ENCODE measurements at regions of chr15 and their contacts with region 1.

Region 1: GRCh38 chr15:50576166-50576565 is 29.7 kb upstream of the USP50 start:
- DNase-seq: no peak
- ATAC-seq: no peak
- H3K4me3 ChIP-seq: no peak overlapping the region
- H3K27ac ChIP-seq: no peak overlapping the region
- H3K4me1 ChIP-seq: peaks cover 0 to 17% (median 0%) of the 10 kb centered on the region in 9 donors
- H3K27me3 ChIP-seq: no peaks in the 10 kb centered on the region
- CTCF ChIP-seq: no peak

Region 2: DNA sequence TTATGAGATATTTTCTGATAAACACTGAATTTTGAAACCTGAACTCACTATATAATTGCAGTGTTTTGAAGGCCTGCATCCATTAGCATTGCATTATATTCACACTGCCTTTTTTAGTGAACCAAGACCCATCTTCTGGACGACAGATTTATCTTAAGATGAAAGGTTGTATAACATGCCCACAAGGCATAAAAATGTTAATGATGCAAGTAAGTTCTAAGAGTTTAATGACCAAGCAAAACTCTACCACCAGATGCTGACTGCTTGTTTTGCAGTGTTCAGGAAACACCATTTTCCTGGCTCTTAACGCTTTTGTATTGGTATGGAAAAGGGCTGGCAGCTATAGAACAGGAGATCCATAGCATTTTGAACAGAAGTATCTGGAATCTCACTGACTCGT is 75.8 kb before region 1 on chr15:
- intact Hi-C with region 1: loop called in 1 of 10 experiments (anchors 5 kb)
- DNase-seq: no peak
- ATAC-seq: no peak
- H3K4me3 ChIP-seq: no peak overlapping the region
- H3K27ac ChIP-seq: no peak overlapping the region
- H3K4me1 ChIP-seq: no peaks in the 10 kb centered on the region
- H3K27me3 ChIP-seq: no peaks in the 10 kb centered on the region
- CTCF ChIP-seq: no peak

Region 3: GRCh38 chr15:50605462-50605861 is 29.3 kb after region 1 on chr15:
- intact Hi-C with region 1: loop called in 1 of 10 experiments (anchors 5 kb)
- DNase-seq: no peak
- ATAC-seq: no peak
- H3K4me3 ChIP-seq: no peak overlapping the region
- H3K27ac ChIP-seq: no peak overlapping the region
- H3K4me1 ChIP-seq: no peaks in the 10 kb centered on the region
- H3K27me3 ChIP-seq: no peaks in the 10 kb centered on the region
- CTCF ChIP-seq: no peak

Region 4: DNA sequence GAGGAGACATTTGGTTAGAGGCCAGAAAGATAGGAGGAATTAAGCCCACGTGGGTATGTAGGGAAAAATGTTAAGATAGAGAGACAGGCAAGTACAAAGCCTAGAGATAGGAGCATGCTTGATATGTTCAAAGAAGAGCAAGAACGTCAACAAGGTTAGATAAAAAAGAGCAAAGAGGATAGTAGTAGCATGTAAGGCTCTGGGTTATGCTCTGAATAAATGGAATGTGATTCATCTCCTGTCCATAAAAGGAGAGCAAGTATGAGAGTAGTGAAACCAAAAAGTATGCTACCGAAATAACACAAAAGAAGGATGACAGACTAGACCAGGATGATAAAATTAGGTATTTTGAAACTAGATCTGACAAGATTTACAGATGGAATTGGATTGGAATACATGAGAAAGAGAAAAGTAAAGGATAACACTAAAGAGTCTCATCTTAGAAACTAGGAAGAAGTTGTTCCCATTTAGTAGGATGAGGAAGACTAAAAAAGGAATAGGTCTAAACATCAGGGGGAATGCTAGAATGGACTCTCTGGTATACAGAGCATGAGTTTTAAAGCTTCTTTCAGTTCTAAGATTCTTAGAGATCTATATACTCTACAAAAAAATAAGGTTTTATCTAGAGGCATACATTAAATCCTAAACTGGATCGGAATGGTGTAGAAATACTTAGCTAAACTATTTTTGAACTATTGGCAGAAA is 51.3 kb after region 1 on chr15:
- intact Hi-C with region 1: loop called in 1 of 10 experiments (anchors 10 kb)
- DNase-seq: no peak
- ATAC-seq: peak in 1 of 8 donors; percentile 56
- H3K4me3 ChIP-seq: no peak overlapping the region
- H3K27ac ChIP-seq: peak overlapping the region in 4 of 10 donors; percentile 15 to 33 (median 28)
- H3K4me1 ChIP-seq: peaks cover 0 to 14% (median 2%) of the 10 kb centered on the region in 9 donors
- H3K27me3 ChIP-seq: no peaks in the 10 kb centered on the region
- CTCF ChIP-seq: no peak

Region 5: GRCh38 chr15:50855092-50855396 is 278.9 kb after region 1 on chr15:
- intact Hi-C with region 1: no loop called
- DNase-seq: no peak
- ATAC-seq: no peak
- H3K4me3 ChIP-seq: no peak overlapping the region
- H3K27ac ChIP-seq: no peak overlapping the region
- H3K4me1 ChIP-seq: no peaks in the 10 kb centered on the region
- H3K27me3 ChIP-seq: no peaks in the 10 kb centered on the region
- CTCF ChIP-seq: no peak

Measured in heart right ventricle (tissue), 16 donors.